Ascending aorta (tissue), 2 donors: ENCODE measurements at regions of chr2 and their contacts with region 1.

Region 1: DNA sequence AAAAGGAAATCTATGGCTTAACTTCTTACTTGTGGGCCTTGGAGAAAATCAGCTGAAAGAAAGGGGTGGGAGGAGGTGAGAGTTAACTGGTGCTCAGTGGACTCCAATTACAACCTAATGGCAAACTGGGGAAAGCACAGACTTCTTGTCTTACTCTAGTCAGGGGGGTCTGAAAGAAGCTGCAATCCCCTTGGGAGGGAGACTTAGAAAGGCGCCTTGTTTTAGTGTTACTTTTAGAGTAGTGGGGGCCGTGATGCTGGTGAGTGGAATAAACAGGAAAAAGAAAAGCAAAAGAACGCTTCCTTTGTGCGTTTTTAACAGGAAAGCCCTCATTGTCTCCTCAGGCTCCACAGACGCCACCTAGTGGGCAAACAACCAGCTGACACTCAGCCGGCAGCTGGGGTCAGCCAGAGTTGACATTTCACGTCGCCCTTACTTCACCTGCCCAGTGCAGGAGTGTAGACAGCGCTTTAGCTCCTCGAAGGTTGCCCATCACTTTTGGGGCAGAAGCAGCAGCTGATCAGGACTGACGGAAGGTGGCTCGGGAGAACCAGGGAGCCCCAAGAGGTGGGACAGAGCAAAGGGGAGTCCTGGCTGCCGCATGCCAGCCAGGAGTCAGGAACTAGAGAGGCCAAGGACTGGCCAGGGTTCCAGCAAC is 55.9 kb upstream of the GORASP2 start:
- DNase-seq: peak; percentile 12 to 68
- H3K4me3 ChIP-seq: peak overlapping the region in 1 of 2 donors; percentile 26
- H3K27ac ChIP-seq: no peak overlapping the region
- H3K4me1 ChIP-seq: peaks cover 0 to 2% of the 10 kb centered on the region in 2 donors
- H3K27me3 ChIP-seq: no peaks in the 10 kb centered on the region
- CTCF ChIP-seq: peak; percentile 51 to 88 (median 79)

Region 2: DNA sequence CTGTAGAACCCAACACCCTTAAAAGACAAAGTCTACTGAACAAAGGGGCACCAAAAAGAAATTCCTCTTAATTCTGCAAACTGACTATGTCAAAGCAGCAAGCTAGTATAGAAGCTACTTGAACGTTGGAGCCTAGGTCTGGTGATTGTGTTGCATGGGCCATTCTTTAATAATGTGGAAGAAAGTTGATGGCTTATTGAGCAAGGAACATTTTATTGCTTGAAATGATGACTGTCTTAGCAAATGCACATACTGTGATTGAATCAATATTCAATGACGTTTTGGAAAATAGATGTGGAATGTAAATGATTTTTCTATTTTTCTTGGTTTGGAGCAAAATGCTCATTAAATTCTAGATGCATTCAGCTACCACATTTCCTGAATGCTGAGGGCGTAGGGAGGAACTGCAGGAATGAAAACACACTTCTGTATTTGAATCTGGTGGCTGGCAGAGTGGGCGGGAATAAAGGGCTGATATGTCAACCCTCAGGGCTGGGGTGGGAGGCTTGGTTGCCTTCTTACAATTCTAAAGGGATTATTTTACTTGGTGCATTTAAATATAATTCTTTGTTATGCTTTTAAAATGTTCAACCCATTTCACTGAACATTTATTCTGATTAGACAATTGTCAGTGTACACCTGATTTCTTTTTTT is 668.7 kb before region 1 on chr2:
- intact Hi-C with region 1: no loop called
- DNase-seq: no peak
- H3K4me3 ChIP-seq: no peak overlapping the region
- H3K27ac ChIP-seq: no peak overlapping the region
- H3K4me1 ChIP-seq: no peaks in the 10 kb centered on the region
- H3K27me3 ChIP-seq: no peaks in the 10 kb centered on the region
- CTCF ChIP-seq: no peak

Region 3: GRCh38 chr2:170324640-170325046 is 548.5 kb before region 1 on chr2:
- intact Hi-C with region 1: loop called (anchors 5 kb)
- DNase-seq: no peak
- H3K4me3 ChIP-seq: no peak overlapping the region
- H3K27ac ChIP-seq: no peak overlapping the region
- H3K4me1 ChIP-seq: no peaks in the 10 kb centered on the region
- H3K27me3 ChIP-seq: no peaks in the 10 kb centered on the region
- CTCF ChIP-seq: peak in 2 of 3 experiments; percentile 47 to 53

Region 4: GRCh38 chr2:170369894-170370293 is 503.3 kb before region 1 on chr2:
- intact Hi-C with region 1: loop called (anchors 10 kb)
- DNase-seq: no peak
- H3K4me3 ChIP-seq: no peak overlapping the region
- H3K27ac ChIP-seq: no peak overlapping the region
- H3K4me1 ChIP-seq: no peaks in the 10 kb centered on the region
- H3K27me3 ChIP-seq: no peaks in the 10 kb centered on the region
- CTCF ChIP-seq: peak in 2 of 3 experiments; percentile 18 to 48

Region 5: DNA sequence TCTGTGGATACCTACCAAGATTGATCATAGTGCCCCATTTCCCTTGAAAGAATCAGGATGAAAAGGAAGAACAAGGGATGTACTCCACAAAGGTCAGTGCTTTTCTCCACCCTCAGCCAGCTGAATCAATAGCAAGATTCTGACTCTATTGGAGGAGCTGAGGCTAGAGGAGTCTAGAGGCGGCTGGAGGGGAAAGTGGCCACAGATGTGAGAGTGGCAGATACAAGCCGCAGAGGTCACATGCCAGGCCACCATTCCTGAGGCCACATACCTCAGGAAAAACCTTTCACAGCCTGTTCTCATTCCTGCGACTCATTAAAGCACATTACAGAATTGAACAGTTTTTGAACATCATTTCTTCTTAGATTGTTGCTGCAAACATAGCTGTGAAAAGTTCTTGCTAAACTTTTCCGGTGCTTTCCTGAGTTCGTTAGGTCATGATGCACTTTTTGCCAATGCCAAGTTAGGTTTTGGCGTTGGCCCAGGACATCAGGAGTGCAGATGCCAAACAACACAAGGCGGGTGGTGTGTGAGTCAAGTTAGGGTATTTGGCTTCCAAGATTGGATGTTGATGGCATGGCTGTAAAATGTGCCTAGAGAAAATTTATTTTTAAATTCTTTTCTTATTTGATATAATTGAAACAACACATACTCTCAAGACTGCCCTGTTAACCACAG is 318.7 kb before region 1 on chr2:
- intact Hi-C with region 1: no loop called
- DNase-seq: peak; percentile 69 to 96
- H3K4me3 ChIP-seq: no peak overlapping the region
- H3K27ac ChIP-seq: peak overlapping the region; percentile 81 to 91
- H3K4me1 ChIP-seq: peaks cover 6 to 17% of the 10 kb centered on the region in 2 donors
- H3K27me3 ChIP-seq: no peaks in the 10 kb centered on the region
- CTCF ChIP-seq: no peak

Region 6: GRCh38 chr2:171991027-171991426 is 1117.9 kb after region 1 on chr2:
- intact Hi-C with region 1: no loop called
- DNase-seq: no peak
- H3K4me3 ChIP-seq: no peak overlapping the region
- H3K27ac ChIP-seq: no peak overlapping the region
- H3K4me1 ChIP-seq: no peaks in the 10 kb centered on the region
- H3K27me3 ChIP-seq: no peaks in the 10 kb centered on the region
- CTCF ChIP-seq: no peak